ENCODE measurements at regions of chr10 and their contacts with region 1.

Region 1: GRCh38 chr10:88932539-88933256 is 19.9 kb downstream of the ACTA2 start:
- DNase-seq: peak; percentile 96
- H3K4me3 ChIP-seq: no peak overlapping the region
- H3K27ac ChIP-seq: peak overlapping the region; percentile 25; the same call in 1 of the 2 replicates
- H3K4me1 ChIP-seq: peaks cover 10% of the 10 kb centered on the region
- H3K27me3 ChIP-seq: no peaks in the 10 kb centered on the region

Region 2: GRCh38 chr10:88687853-88688467 is 244.7 kb before region 1 on chr10:
- in situ Hi-C with region 1: loop called (anchors 25 kb)
- DNase-seq: peak; percentile 54
- H3K4me3 ChIP-seq: no peak overlapping the region
- H3K27ac ChIP-seq: no peak overlapping the region
- H3K4me1 ChIP-seq: no peaks in the 10 kb centered on the region
- H3K27me3 ChIP-seq: no peaks in the 10 kb centered on the region

Region 3: DNA sequence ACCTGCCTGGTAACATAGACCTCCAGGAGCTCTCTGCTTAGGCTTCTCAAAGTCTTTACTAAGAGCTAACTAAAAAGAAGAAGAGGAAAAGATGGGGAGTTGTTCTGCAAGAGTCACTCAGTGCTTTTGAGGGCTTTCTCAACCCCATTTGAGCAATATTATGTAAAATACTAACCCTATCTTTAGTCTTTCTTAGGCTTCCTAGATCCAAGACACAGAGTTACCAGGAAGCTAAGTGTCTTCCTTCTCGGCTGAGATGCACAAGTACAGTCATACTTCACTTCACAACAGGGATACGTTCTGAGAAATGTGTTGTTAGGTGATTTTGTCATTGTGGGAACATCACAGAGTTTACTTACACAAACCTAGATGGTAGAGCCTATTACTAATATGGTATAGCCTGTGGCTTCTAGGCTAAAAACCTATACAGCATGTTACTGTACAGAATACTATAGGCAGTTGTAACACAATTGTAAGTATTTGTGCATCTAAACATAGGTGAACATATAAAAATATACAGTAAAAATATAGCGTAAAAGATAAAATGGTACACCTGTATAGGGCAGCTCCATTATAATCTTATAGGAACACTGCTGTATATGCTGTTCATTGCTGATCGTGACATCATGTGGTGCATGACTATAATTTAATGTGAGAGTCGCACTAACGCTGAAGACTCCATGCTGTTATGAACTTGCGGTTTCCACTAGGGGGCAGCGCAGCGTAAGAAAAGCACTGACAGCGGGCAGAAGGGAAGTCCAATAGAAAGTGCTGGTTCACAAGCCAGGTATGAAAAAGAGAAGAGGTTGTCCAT is 97.4 kb before region 1 on chr10:
- in situ Hi-C with region 1: loop called (anchors 5 kb)
- DNase-seq: peak; percentile 90
- H3K4me3 ChIP-seq: no peak overlapping the region
- H3K27ac ChIP-seq: no peak overlapping the region
- H3K4me1 ChIP-seq: no peaks in the 10 kb centered on the region
- H3K27me3 ChIP-seq: no peaks in the 10 kb centered on the region

Region 4: DNA sequence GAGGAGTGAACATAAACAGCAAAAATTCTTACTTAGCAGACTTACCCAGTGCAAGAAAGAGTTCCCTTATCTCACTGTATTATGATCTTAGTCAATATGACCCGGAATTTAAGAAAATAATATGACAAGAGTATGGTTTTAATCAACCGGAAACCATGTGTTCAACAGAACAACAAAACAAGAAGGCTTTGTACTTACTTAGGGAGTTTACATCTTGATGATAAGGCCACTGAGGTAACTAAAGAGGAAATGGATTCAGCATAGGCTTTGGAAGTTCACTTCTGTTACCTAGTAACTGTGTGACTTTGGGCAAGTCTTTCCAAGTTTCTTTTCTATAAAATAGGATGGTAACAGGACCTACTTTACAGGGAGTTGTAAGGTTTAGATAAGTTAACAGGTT is 50.5 kb after region 1 on chr10:
- in situ Hi-C with region 1: loop called (anchors 5 kb)
- DNase-seq: no peak
- H3K4me3 ChIP-seq: no peak overlapping the region
- H3K27ac ChIP-seq: no peak overlapping the region
- H3K4me1 ChIP-seq: peaks cover 20% of the 10 kb centered on the region
- H3K27me3 ChIP-seq: no peaks in the 10 kb centered on the region

Region 5: GRCh38 chr10:88994019-88994418 is 61.3 kb after region 1 on chr10:
- in situ Hi-C with region 1: no loop called
- DNase-seq: peak; percentile 77
- H3K4me3 ChIP-seq: peak overlapping the region; percentile 90
- H3K27ac ChIP-seq: peak overlapping the region; percentile 47
- H3K4me1 ChIP-seq: peaks cover 38% of the 10 kb centered on the region
- H3K27me3 ChIP-seq: no peaks in the 10 kb centered on the region

Region 6: GRCh38 chr10:89217057-89217990 is 284.6 kb after region 1 on chr10:
- in situ Hi-C with region 1: loop called (anchors 10 kb)
- DNase-seq: peak; percentile 72
- H3K4me3 ChIP-seq: 0 out of 2 replicates have a peak overlapping the region, but pooled peaks have one; percentile 5
- H3K27ac ChIP-seq: peak overlapping the region; percentile 27; the same call in 1 of the 2 replicates
- H3K4me1 ChIP-seq: peaks cover 27% of the 10 kb centered on the region
- H3K27me3 ChIP-seq: no peaks in the 10 kb centered on the region

Measured in GM23248 (cell line).